Right cardiac atrium (tissue), 5 donors: ENCODE measurements at regions of chr9 and their contacts with region 1.

Region 1: DNA sequence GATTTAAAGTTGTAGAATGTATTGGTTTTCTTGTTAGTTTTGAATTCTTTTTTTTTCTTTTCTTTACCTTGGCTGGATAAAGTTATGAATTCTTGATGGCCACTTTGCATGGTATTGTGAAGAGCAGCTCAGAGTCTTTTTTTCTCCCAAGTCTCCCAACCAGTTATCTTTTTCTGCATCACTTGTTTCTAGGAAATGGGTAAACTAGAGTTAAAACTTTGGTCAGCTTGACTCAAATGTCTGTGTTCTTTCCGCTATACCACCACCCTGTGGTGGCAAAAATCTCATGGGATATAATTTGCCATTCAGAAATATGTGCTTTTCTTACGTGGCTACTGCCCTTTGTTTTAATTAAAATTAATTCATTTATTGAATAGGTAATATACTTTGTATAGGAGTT is 113.2 kb downstream of the UNC13B start:
- DNase-seq: no peak
- ATAC-seq: no peak
- H3K4me3 ChIP-seq: no peak overlapping the region
- H3K27ac ChIP-seq: no peak overlapping the region
- H3K4me1 ChIP-seq: no peaks in the 10 kb centered on the region
- H3K27me3 ChIP-seq: no peaks in the 10 kb centered on the region

Region 2: DNA sequence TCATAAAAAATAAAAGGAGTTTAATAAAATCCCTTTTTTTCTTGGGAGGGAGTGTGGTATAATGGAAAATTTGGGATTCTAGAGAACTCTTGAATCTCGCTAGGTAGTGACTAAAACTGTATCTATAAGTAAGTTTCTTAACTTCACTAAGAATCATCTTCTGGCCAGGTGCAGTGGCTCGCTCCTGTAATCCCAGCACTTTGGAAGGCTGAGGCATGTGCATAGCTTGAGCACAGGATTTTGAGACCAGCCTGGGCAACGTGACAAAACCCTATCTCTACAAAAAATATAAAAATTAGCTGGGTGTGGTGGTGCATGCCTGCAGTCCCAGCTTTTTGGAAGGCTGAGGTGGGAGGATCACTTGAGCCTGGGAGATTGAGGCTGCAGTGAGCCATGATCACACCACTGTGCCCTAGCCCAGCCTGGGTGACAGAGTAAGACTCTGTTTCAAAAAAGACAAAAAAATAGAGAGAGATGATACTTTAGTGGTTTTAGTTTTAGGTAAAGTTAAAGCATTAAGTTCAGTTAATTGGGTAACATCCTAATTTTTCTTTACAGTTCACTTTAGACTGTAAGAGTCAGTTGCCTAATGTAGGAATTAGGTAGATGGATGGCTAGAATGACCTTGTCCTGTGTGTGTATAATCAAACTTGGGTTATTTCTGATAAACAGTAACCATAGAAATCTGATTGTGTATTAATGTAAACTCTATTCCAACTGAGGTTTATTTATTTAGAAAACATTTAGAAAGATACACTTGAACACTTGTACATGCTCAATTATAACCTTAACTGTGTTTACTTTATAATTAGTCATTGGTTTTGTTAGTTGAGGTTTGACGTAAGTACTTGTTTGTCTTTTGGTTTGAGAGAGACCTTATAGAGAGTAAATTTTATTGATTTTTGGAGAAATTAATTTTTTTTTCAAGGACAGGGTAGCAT is 95.4 kb before region 1 on chr9:
- intact Hi-C with region 1: no loop called
- DNase-seq: no peak
- ATAC-seq: no peak
- H3K4me3 ChIP-seq: no peak overlapping the region
- H3K27ac ChIP-seq: no peak overlapping the region
- H3K4me1 ChIP-seq: no peaks in the 10 kb centered on the region
- H3K27me3 ChIP-seq: no peaks in the 10 kb centered on the region

Region 3: DNA sequence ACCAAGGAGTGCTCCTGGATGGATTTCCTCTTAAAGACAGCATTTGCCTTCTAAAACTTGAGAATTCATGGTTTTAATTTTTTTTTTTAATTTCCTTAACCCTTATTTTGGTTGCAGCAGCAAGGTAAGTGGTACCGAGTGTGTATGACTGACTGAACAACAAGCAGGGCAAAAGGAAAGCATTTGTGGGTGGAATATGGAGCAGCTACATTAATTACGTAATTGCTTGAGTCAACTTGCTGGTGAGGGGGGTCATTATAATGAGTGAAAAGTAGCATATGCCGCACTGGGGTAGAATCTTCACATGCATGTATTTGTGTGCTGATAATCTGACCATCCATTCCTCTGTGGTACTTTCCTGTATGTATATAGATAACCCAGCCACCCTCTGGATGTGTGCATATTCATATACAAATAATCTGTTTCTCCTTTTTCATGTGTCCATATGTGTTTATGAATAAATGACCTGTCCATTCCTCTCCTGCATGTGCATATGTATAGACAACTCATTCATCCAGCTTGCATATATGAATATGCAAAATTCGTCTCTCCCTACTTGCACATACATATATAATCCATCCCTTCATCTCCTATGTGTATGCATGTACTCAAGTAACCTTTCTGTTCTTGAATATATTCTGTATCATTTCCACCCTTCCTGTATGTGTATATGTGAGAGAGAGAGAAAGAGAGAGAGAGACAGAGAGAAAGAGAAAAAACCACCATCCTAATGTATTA is 67.4 kb after region 1 on chr9:
- intact Hi-C with region 1: loop called in 1 of 4 experiments (anchors 2 kb)
- DNase-seq: no peak
- ATAC-seq: no peak
- H3K4me3 ChIP-seq: peak overlapping the region; percentile 39
- H3K27ac ChIP-seq: no peak overlapping the region
- H3K4me1 ChIP-seq: peaks cover 17% of the 10 kb centered on the region
- H3K27me3 ChIP-seq: no peaks in the 10 kb centered on the region